ENCODE measurements at regions of chr21 and their contacts with region 1.

Region 1: GRCh38 chr21:44510508-44511210 is 29.3 kb downstream of the KRTAP10-1 start:
- DNase-seq: peak; percentile 66 to 94 (median 81)
- ATAC-seq: peak; percentile 95
- H3K4me3 ChIP-seq: peak overlapping the region; percentile 41 to 45
- H3K4me3 Mint-ChIP-seq: peak overlapping the region; percentile 60
- H3K27ac ChIP-seq: no peak overlapping the region
- H3K27ac Mint-ChIP-seq: no peak overlapping the region
- H3K4me1 ChIP-seq: peaks cover 11% of the 10 kb centered on the region
- H3K4me1 Mint-ChIP-seq: peaks cover 4% of the 10 kb centered on the region
- H3K27me3 ChIP-seq: no peaks in the 10 kb centered on the region
- H3K27me3 Mint-ChIP-seq: no peaks in the 10 kb centered on the region
- CTCF ChIP-seq: peak; percentile 93

Region 2: GRCh38 chr21:44520955-44521622 is 10.4 kb after region 1 on chr21:
- CTCF ChIA-PET with region 1: interaction called, 11 read pairs
- POLR2A ChIA-PET with region 1: no interaction called
- intact Hi-C with region 1: no loop called
- DNase-seq: peak in 1 of 9 experiments; percentile 1
- ATAC-seq: no peak
- H3K4me3 ChIP-seq: no peak overlapping the region
- H3K4me3 Mint-ChIP-seq: no peak overlapping the region
- H3K27ac ChIP-seq: no peak overlapping the region
- H3K27ac Mint-ChIP-seq: no peak overlapping the region
- H3K4me1 ChIP-seq: no peaks in the 10 kb centered on the region
- H3K4me1 Mint-ChIP-seq: no peaks in the 10 kb centered on the region
- H3K27me3 ChIP-seq: no peaks in the 10 kb centered on the region
- H3K27me3 Mint-ChIP-seq: no peaks in the 10 kb centered on the region
- CTCF ChIP-seq: no peak

Region 3: GRCh38 chr21:44709426-44710293 is 199.0 kb after region 1 on chr21:
- CTCF ChIA-PET with region 1: interaction called, 12 read pairs
- POLR2A ChIA-PET with region 1: interaction called, 3 read pairs
- intact Hi-C with region 1: no loop called
- DNase-seq: peak in 4 of 9 experiments; percentile 39 to 60 (median 46)
- ATAC-seq: peak; percentile 42
- H3K4me3 ChIP-seq: peak overlapping the region in 1 of 2 experiments; percentile 20
- H3K4me3 Mint-ChIP-seq: peak overlapping the region; percentile 60
- H3K27ac ChIP-seq: no peak overlapping the region
- H3K27ac Mint-ChIP-seq: no peak overlapping the region
- H3K4me1 ChIP-seq: peaks cover 38% of the 10 kb centered on the region
- H3K4me1 Mint-ChIP-seq: peaks cover 27% of the 10 kb centered on the region
- H3K27me3 ChIP-seq: peaks cover 47 to 57% of the 10 kb centered on the region in 2 experiments
- H3K27me3 Mint-ChIP-seq: peaks cover 72% of the 10 kb centered on the region
- CTCF ChIP-seq: no peak

Region 4: DNA sequence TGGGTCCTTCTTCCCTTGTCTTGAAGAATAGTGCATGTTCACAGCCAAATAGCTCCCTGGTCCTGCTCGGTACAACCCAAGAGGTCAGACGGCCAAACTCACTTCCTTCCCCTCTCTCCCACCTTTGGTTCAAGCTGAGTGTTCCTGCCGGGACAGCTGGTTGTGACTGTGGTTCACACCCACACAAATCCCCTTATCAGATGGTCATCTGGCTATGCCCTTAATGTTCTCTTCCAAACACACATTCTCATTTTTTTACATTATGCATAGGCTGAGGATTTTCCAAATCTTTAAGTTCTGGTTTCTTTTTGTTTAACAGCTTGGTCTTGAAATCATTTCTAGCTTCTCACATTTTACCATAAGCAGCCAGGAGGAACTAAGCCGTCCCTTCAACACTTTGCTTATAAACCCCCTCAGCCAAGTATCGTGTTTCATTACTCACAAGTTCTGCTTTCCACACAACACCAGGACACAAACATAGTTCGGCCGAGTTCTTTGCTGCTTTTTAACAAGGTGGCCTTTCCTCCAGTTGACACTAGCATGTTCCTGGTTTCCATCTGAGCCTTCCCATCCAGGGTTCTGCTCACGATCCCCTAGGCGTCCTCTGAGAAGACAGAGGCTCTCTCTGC is 220.4 kb after region 1 on chr21:
- CTCF ChIA-PET with region 1: interaction called, 231 read pairs
- POLR2A ChIA-PET with region 1: no interaction called
- intact Hi-C with region 1: no loop called
- DNase-seq: no peak
- ATAC-seq: no peak
- H3K4me3 ChIP-seq: no peak overlapping the region
- H3K4me3 Mint-ChIP-seq: no peak overlapping the region
- H3K27ac ChIP-seq: no peak overlapping the region
- H3K27ac Mint-ChIP-seq: no peak overlapping the region
- H3K4me1 ChIP-seq: no peaks in the 10 kb centered on the region
- H3K4me1 Mint-ChIP-seq: no peaks in the 10 kb centered on the region
- H3K27me3 ChIP-seq: no peaks in the 10 kb centered on the region
- H3K27me3 Mint-ChIP-seq: peaks cover 4% of the 10 kb centered on the region
- CTCF ChIP-seq: no peak

Region 5: DNA sequence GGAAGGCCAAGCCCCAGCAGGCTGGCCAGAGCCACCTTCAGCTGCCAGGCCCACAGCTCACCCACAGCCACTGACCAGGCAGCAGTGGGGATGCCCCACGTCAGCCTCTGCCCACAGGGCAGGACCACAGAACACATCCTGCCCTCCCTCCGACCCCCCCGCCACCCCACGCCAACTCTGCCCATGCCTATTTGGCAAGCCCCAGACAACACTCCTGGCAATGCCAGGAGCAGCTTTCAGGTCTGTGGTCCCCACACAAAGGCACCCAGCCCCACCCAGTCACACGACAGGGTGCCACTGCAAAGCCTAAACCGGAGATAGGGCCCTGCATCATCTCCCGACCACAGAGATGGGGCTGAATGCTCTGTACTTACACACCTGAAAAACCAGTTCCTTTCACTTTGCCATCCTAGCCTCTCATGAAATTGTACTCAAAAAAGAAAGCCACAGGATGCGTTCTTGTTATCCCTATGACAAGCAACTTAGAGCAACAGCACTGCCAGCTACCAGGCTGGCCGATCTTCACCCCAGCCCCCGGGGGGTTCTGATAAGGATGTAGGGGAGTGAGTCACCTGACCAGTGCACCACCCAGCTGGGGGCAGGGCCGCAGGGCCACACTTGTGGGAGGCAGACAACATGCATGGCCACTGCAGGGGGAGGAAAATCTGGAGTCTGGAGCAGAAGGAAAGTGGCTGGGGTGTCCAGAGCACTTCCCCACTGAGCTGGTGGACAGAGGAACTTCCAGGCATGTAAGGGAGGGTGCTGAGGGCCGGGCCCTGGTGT is 254.8 kb after region 1 on chr21:
- CTCF ChIA-PET with region 1: interaction called, 13 read pairs
- POLR2A ChIA-PET with region 1: no interaction called
- intact Hi-C with region 1: no loop called
- DNase-seq: peak; percentile 26 to 87 (median 60)
- ATAC-seq: peak; percentile 97
- H3K4me3 ChIP-seq: peak overlapping the region in 1 of 2 experiments; percentile 36
- H3K4me3 Mint-ChIP-seq: peak overlapping the region; percentile 68
- H3K27ac ChIP-seq: peak overlapping the region; percentile 58 to 79
- H3K27ac Mint-ChIP-seq: peak overlapping the region; percentile 98
- H3K4me1 ChIP-seq: peaks cover 30% of the 10 kb centered on the region
- H3K4me1 Mint-ChIP-seq: peaks cover 17% of the 10 kb centered on the region
- H3K27me3 ChIP-seq: no peaks in the 10 kb centered on the region
- H3K27me3 Mint-ChIP-seq: no peaks in the 10 kb centered on the region
- CTCF ChIP-seq: no peak

Region 6: GRCh38 chr21:44801468-44802395 is 291.1 kb after region 1 on chr21 and contains the start of gene UBE2G2:
- CTCF ChIA-PET with region 1: interaction called, 23 read pairs
- POLR2A ChIA-PET with region 1: no interaction called
- intact Hi-C with region 1: no loop called
- DNase-seq: peak; percentile 70 to 91 (median 85)
- ATAC-seq: peak; percentile 88
- H3K4me3 ChIP-seq: peak within 1 kb of the TSS; percentile 76 to 95
- H3K4me3 Mint-ChIP-seq: peak within 1 kb of the TSS; percentile 95
- H3K27ac ChIP-seq: peak within 1 kb of the TSS; percentile 64 to 71
- H3K27ac Mint-ChIP-seq: peak within 1 kb of the TSS; percentile 92
- H3K4me1 ChIP-seq: peaks cover 20% of the 10 kb centered on the region
- H3K4me1 Mint-ChIP-seq: peaks cover 47% of the 10 kb centered on the region
- H3K27me3 ChIP-seq: no peaks in the 10 kb centered on the region
- H3K27me3 Mint-ChIP-seq: no peaks in the 10 kb centered on the region
- CTCF ChIP-seq: peak; percentile 52
- total RNA-seq, gene UBE2G2: 88.8 to 89.1 TPM

Region 7: GRCh38 chr21:44927587-44928461 is 417.2 kb after region 1 on chr21:
- CTCF ChIA-PET with region 1: interaction called, 8 read pairs
- POLR2A ChIA-PET with region 1: no interaction called
- intact Hi-C with region 1: loop called in 1 of 2 experiments (anchors 2 kb)
- DNase-seq: peak; percentile 59 to 96 (median 90)
- ATAC-seq: peak; percentile 78
- H3K4me3 ChIP-seq: peak overlapping the region; percentile 68 to 92
- H3K4me3 Mint-ChIP-seq: peak overlapping the region; percentile 91
- H3K27ac ChIP-seq: peak overlapping the region; percentile 75 to 79
- H3K27ac Mint-ChIP-seq: peak overlapping the region; percentile 96
- H3K4me1 ChIP-seq: peaks cover 82% of the 10 kb centered on the region
- H3K4me1 Mint-ChIP-seq: peaks cover 76% of the 10 kb centered on the region
- H3K27me3 ChIP-seq: no peaks in the 10 kb centered on the region
- H3K27me3 Mint-ChIP-seq: no peaks in the 10 kb centered on the region
- CTCF ChIP-seq: no peak

Measured in CD8-positive, alpha-beta T cell (primary cell).